Cardiac septum (tissue), 1 donor: ENCODE measurements at regions of chr3 and their contacts with region 1.

Region 1: DNA sequence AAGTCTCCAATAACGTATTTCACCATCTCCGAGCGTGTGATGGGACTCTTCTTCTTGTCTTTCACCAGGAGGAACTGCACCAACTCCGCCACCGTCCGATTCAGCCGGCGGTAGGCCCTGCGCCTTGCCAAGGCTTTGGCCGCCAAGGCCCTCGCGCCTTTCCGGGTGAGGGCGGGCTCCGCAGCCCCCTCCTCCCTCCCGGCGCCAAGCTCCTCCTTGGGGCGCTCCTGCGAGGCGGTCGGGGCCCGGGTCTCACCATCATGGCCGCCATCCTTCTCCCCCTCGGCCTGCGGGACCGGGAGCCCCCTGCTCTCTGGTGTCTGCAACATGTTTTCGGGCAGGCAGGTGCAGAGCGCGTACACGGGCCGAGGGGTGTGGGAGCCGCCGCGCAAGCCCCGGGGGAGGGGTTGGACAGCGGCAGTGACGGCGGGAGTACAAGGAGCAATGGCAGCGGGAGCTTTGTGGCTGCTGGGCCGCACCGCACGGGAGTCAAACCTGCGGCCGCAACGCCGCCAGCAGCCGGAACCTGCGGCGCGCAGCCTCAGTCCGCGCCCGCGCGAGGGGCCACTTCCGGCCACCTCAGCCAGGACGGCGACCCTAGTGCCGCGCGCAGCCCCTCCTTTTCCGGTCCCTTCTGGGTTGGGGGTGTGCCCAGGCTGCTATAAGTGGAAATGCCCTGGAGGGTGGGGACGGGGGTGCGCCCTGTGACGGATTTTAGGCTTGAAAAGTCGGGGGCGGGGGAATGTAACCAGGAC is at the start of gene MAGEF1:
- DNase-seq: peak; percentile 90
- total RNA-seq, gene MAGEF1: 30.2 TPM

Region 2: GRCh38 chr3:184583578-184584425 is 127.9 kb before region 1 on chr3:
- intact Hi-C with region 1: loop called (anchors 1 kb)
- DNase-seq: no peak

Region 3: GRCh38 chr3:184659797-184660306 is 51.8 kb before region 1 on chr3:
- intact Hi-C with region 1: no loop called
- DNase-seq: no peak

Region 4: GRCh38 chr3:184788751-184789150 is 77.1 kb after region 1 on chr3:
- intact Hi-C with region 1: no loop called
- DNase-seq: no peak